BJ (cell line): ENCODE measurements at regions of chr19 and their contacts with region 1.

Region 1: DNA sequence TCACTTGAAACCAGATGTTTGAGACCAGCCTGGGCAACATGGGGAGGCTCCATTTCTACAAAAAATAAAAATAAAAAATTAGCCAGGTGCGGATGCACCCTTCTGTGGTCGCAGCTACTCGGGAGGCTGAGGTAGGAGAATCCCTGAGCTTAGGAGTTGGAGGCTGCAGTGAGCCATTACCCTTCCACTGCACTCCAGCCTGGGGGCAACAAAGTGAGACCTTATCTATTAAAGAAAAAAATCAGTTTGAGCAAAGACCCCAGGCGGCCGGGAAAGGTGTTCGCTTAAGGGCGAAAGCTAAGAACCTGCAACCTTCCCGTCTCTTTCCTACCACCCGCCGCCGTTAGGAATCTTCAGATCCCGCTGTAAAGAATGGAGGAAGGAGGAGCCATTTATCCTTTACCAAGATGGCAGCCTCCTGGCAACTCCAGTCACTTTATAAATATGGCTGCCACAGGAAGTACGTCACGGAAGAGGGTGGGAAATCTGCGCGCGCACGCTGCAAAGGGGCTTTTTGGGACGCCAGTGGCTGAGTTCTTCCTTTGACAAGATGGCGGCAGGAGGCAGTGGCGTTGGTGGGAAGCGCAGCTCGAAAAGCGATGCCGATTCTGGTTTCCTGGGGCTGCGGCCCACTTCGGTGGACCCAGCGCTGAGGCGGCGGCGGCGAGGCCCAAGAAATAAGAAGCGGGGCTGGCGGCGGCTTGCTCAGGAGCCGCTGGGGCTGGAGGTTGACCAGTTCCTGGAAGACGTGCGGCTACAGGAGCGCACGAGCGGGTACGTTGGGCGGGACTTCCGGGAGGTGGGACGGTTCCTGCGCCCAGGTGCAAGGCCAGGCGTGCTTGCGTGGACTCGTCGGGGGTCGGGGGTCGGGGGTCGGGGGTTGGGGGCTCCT is at the start of gene NOP53:
- DNase-seq: peak; percentile 85
- H3K4me3 ChIP-seq: peak within 1 kb of the TSS; percentile 83
- H3K27me3 ChIP-seq: no peaks in the 10 kb centered on the region
- CTCF ChIP-seq: no peak
- polyA plus RNA-seq, gene NOP53: 119 and 135 TPM in 2 replicates

Region 2: DNA sequence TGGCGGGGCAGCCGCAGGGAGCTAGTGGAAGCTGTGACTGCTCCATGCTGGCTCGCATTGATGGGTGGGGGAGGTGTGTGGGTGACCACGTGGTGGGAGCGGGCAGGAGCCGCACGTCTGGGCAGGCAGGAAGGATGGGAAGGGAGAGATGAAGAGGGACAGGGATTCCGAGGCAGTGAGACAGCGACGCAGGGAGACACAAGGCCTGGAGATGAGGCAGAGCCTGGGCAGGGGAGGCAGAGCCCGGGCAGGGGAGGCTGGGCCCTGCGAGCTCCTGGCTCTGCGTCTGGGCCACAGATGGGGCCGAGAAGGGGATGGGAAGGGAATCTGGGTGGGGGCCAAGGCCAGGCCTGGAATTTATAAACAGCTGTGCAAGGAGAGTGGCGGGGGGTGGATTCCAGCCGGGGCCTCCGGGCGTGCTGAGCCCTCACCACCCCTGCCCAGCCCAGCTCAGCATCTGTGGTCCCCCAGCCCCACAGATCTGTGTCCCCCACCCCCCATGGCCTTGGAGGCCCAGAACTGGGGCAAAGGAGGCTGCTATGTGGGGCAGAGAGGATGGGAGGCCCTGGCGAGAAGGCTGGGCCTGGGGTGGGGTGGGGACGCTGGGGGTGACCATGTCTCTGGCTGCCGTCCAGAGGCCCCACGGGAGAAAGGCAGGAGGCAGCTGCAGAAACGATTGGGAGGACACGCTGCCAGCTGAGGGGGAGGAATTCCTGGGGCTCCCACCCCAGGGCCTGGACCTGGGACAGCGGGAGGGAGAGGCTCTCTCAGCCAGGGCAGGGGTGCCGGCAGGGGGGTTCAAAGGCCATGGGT is 26.0 kb before region 1 on chr19:
- CTCF ChIA-PET with region 1: interaction called, 160 read pairs
- POLR2A ChIA-PET with region 1: interaction called, 5 read pairs
- DNase-seq: peak; percentile 99
- H3K4me3 ChIP-seq: peak overlapping the region; percentile 28
- H3K27me3 ChIP-seq: no peaks in the 10 kb centered on the region
- CTCF ChIP-seq: no peak